CD8-positive, alpha-beta T cell (primary cell): ENCODE measurements at regions of chr4 and their contacts with region 1.

Region 1: GRCh38 chr4:15805583-15806517 is 27.7 kb downstream of the CD38 start:
- DNase-seq: peak in 7 of 9 experiments; percentile 9 to 76 (median 43)
- ATAC-seq: peak; percentile 82
- H3K4me3 ChIP-seq: no peak overlapping the region
- H3K4me3 Mint-ChIP-seq: no peak overlapping the region
- H3K27ac ChIP-seq: no peak overlapping the region
- H3K27ac Mint-ChIP-seq: no peak overlapping the region
- H3K4me1 ChIP-seq: no peaks in the 10 kb centered on the region
- H3K4me1 Mint-ChIP-seq: peaks cover 15% of the 10 kb centered on the region
- H3K27me3 ChIP-seq: no peaks in the 10 kb centered on the region
- H3K27me3 Mint-ChIP-seq: no peaks in the 10 kb centered on the region
- CTCF ChIP-seq: peak; percentile 82

Region 2: DNA sequence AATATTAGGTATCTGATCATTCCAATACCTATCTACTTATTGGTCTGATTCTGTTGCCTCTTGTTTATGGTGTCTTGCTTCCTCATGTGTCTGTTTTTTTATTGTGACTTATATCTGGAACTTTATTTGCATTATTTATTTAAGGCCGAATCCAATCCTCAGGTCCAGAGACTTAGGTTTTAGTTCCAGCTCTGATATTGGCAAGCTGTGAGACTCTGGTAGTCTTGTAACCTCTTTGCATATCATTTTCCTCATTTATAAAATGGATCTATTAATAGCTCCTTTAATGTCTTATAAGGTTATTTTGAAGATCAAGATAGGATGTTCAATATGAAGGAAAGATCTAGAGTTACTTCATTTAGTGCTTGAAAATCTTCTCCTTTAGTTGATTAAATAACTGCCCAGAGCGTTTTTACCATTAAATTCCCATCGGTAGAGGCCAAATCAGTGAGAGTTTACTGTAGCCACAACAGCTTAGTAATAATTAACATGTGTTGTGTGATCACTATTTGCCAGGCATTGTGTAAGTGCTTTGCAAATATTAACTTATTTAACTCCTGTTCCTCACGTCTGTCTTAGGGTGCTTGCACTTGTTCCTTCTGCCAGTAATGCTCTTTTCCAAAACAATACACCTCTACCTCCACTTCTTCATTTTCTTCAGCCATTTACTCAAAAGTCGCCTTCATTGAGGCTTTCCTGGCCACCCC is 254.0 kb before region 1 on chr4:
- CTCF ChIA-PET with region 1: no interaction called
- POLR2A ChIA-PET with region 1: no interaction called
- intact Hi-C with region 1: no loop called
- DNase-seq: no peak
- ATAC-seq: no peak
- H3K4me3 ChIP-seq: no peak overlapping the region
- H3K4me3 Mint-ChIP-seq: no peak overlapping the region
- H3K27ac ChIP-seq: no peak overlapping the region
- H3K27ac Mint-ChIP-seq: no peak overlapping the region
- H3K4me1 ChIP-seq: peaks cover 9% of the 10 kb centered on the region
- H3K4me1 Mint-ChIP-seq: peaks cover 8% of the 10 kb centered on the region
- H3K27me3 ChIP-seq: no peaks in the 10 kb centered on the region
- H3K27me3 Mint-ChIP-seq: no peaks in the 10 kb centered on the region
- CTCF ChIP-seq: no peak

Region 3: GRCh38 chr4:15677507-15677988 is 128.3 kb before region 1 on chr4:
- CTCF ChIA-PET with region 1: no interaction called
- POLR2A ChIA-PET with region 1: no interaction called
- intact Hi-C with region 1: no loop called
- DNase-seq: no peak
- ATAC-seq: no peak
- H3K4me3 ChIP-seq: no peak overlapping the region
- H3K4me3 Mint-ChIP-seq: no peak overlapping the region
- H3K27ac ChIP-seq: no peak overlapping the region
- H3K27ac Mint-ChIP-seq: no peak overlapping the region
- H3K4me1 ChIP-seq: peaks cover 6% of the 10 kb centered on the region
- H3K4me1 Mint-ChIP-seq: peaks cover 6% of the 10 kb centered on the region
- H3K27me3 ChIP-seq: no peaks in the 10 kb centered on the region
- H3K27me3 Mint-ChIP-seq: no peaks in the 10 kb centered on the region
- CTCF ChIP-seq: no peak

Region 4: DNA sequence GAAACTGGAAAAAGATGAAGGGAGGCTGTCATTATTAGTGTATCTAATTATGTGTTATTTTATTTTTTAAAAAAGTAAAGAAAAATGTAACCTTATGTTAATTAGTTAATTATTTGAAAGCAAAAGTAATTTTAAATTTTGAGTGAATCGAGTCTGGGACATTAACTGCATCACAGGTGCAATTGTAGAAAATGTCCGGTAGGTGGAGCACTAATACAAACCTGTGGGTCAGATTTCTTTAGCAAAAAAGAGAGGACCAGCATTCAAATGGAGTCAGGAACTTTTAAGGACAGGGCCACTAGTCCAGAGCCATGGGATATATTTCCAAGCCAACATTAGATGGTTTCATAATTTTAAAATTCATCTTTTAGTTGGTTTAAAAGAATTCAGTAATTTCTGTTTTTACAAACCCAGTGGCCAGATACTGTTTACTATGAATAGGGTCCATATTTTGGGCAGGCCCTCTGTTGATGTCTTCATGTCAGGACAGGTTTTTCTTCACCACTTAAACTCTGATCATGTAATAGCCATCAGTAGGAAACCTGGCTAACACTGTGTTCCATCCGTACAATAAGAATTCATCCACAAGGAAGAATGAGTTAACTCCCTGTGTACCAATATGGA is 75.8 kb before region 1 on chr4:
- CTCF ChIA-PET with region 1: interaction called, 31 read pairs
- POLR2A ChIA-PET with region 1: interaction called, 3 read pairs
- intact Hi-C with region 1: loop called (anchors 1 to 2 kb)
- DNase-seq: peak in 6 of 9 experiments; percentile 10 to 71 (median 28)
- ATAC-seq: peak; percentile 70
- H3K4me3 ChIP-seq: no peak overlapping the region
- H3K4me3 Mint-ChIP-seq: no peak overlapping the region
- H3K27ac ChIP-seq: no peak overlapping the region
- H3K27ac Mint-ChIP-seq: no peak overlapping the region
- H3K4me1 ChIP-seq: no peaks in the 10 kb centered on the region
- H3K4me1 Mint-ChIP-seq: peaks cover 20% of the 10 kb centered on the region
- H3K27me3 ChIP-seq: no peaks in the 10 kb centered on the region
- H3K27me3 Mint-ChIP-seq: peaks cover 2% of the 10 kb centered on the region
- CTCF ChIP-seq: peak; percentile 100

Region 5: DNA sequence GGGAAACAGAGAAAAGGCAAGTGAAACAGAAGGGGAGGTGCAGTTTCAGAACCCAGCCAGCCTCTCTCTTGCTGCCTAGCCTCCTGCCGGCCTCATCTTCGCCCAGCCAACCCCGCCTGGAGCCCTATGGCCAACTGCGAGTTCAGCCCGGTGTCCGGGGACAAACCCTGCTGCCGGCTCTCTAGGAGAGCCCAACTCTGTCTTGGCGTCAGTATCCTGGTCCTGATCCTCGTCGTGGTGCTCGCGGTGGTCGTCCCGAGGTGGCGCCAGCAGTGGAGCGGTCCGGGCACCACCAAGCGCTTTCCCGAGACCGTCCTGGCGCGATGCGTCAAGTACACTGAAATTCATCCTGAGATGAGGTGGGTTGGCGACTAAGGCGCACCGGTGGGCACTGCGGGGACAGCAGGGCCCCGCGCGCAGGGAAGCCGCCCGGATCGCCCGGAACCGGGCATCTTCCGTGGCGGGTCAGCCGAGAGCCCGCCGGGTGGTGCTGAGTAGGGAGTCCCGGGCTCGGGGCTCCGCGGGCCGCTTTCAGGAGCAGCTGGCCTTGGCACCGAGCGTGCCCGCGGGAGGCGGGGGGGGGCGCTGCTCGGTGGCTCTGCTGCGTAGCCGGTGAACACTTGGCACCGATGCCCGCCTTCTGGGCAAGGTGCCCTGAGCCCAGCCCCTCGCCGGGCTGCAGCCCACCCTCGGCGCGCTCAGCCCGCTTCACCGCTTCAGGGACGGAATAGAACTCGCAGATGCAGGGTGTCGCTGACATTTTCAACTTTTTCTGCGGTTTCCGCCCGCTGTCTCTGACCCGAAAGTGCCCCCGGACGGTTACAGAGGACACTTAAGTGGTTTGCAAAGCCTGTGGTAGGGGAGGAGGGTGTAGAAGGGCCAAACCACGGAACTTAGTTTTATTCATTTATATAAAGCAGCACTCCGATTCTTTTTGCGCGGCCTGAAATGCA is 27.3 kb before region 1 on chr4 and contains the start of gene CD38:
- CTCF ChIA-PET with region 1: interaction called, 16 read pairs
- POLR2A ChIA-PET with region 1: no interaction called
- intact Hi-C with region 1: no loop called
- DNase-seq: peak; percentile 16 to 65 (median 52)
- ATAC-seq: peak; percentile 49
- H3K4me3 ChIP-seq: peak within 1 kb of the TSS; percentile 57 to 74
- H3K4me3 Mint-ChIP-seq: peak within 1 kb of the TSS; percentile 85
- H3K27ac ChIP-seq: peak within 1 kb of the TSS in 1 of 2 experiments; percentile 32
- H3K27ac Mint-ChIP-seq: peak within 1 kb of the TSS; percentile 68
- H3K4me1 ChIP-seq: peaks cover 29% of the 10 kb centered on the region
- H3K4me1 Mint-ChIP-seq: peaks cover 56% of the 10 kb centered on the region
- H3K27me3 ChIP-seq: no peaks in the 10 kb centered on the region
- H3K27me3 Mint-ChIP-seq: no peaks in the 10 kb centered on the region
- CTCF ChIP-seq: no peak
- total RNA-seq, gene CD38: 3.5 to 6.2 TPM

Region 6: DNA sequence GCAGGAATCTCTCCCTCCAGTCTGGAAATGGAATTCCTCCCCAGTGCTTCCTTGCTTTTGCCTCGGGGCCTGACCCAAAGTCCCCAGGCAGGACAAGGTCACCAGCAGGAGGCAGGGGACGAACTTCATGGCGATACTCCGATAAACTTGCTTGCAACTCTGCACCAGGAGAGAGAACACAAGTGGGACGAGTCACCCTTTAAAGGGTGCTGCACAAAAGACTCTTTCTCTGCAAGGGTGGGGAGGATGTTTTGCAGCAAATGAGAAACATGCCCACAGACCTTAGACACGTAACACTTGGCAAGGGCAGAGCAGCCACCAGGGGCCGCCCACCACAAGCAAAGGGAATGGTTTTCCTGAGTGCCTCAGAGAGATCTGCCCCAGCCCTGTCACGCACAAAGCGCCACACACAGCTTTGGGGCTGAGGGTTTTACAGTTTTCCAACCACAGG is 157.2 kb after region 1 on chr4 and contains the start of gene FGFBP2:
- CTCF ChIA-PET with region 1: interaction called, 19 read pairs
- POLR2A ChIA-PET with region 1: no interaction called
- intact Hi-C with region 1: no loop called
- DNase-seq: peak; percentile 47 to 91 (median 74)
- ATAC-seq: peak; percentile 84
- H3K4me3 ChIP-seq: peak within 1 kb of the TSS; percentile 26 to 60
- H3K4me3 Mint-ChIP-seq: peak within 1 kb of the TSS; percentile 59
- H3K27ac ChIP-seq: peak within 1 kb of the TSS; percentile 56 to 73
- H3K27ac Mint-ChIP-seq: peak within 1 kb of the TSS; percentile 83
- H3K4me1 ChIP-seq: peaks cover 27% of the 10 kb centered on the region
- H3K4me1 Mint-ChIP-seq: peaks cover 36% of the 10 kb centered on the region
- H3K27me3 ChIP-seq: no peaks in the 10 kb centered on the region
- H3K27me3 Mint-ChIP-seq: no peaks in the 10 kb centered on the region
- CTCF ChIP-seq: peak; percentile 38
- total RNA-seq, gene FGFBP2: 8.2 to 9.9 TPM

Region 7: DNA sequence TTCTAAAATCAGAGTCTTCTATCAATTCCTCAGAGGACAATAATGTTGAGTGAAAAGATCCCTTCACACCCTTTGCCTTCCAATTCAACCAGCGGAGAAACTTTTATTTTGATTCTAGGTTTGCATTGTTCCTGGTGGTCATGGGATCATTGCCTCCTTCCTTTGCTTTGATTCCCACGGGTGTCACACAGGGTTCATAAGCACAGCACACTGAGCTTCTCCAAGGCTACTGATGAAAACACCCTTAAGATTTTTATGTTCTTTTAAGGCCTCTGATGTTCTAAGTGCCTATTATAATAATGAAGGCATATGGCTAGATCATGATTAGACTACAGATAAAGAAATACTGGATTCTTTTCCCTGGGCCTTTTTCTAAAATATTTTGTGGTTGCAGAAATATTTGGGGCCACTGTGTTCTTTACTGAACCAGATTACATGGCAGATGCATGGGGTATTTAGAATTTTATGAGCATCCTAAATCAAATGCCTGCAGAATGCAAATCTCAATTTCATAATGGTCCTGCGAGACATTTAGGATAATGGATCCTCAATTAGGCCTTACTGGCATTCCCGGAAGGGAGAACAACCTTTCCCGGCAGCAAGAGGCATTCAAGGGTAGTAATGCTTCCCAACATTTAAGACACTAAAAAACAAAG is 201.1 kb after region 1 on chr4:
- CTCF ChIA-PET with region 1: interaction called, 22 read pairs
- POLR2A ChIA-PET with region 1: no interaction called
- intact Hi-C with region 1: no loop called
- DNase-seq: no peak
- ATAC-seq: no peak
- H3K4me3 ChIP-seq: no peak overlapping the region
- H3K4me3 Mint-ChIP-seq: no peak overlapping the region
- H3K27ac ChIP-seq: no peak overlapping the region
- H3K27ac Mint-ChIP-seq: no peak overlapping the region
- H3K4me1 ChIP-seq: no peaks in the 10 kb centered on the region
- H3K4me1 Mint-ChIP-seq: no peaks in the 10 kb centered on the region
- H3K27me3 ChIP-seq: no peaks in the 10 kb centered on the region
- H3K27me3 Mint-ChIP-seq: peaks cover 6% of the 10 kb centered on the region
- CTCF ChIP-seq: no peak